ENCODE measurements at regions of chr7 and their contacts with region 1.

Region 1: DNA sequence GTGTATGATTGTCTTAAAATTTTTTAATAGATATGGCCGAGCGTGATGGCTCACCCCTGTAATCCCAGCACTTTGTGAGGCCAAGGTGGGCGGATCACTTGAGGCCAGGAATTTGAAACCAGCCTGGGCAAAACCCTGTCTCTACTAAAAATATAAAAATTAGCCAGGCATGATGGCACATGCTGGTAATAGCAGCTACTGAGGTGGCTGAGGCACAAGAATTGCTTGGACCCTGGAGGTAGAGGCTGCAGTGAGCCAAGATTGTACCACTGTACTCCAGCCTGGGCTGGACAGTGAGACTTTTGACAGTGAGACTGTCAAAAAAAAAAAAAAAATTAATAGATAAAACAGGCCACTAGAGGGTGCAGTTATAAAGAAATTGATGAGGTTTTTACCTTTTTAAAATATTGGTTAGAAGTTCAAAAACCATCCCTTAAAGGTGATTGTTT is 20.5 kb downstream of the NOM1 start:
- DNase-seq: no peak

Region 2: DNA sequence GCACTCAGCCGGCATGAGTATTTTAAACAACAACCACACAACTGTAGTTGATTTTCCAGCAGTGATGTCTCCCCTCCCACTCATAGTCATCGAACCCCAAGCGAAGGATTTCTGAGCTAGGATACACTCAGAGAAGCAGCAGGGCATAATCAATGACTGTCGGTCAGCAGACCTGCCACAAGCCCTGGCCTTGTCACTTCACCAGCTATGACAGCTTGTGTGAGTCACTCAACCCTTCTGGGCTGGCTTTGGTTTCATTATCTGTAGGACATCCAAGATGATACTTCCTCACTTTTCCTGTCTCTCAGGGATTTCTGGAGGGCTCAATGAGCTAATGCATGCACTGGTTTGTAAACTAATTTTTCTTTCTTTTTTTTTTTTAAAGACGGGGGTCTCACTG is 146.8 kb after region 1 on chr7:
- intact Hi-C with region 1: no loop called
- DNase-seq: no peak

Region 3: GRCh38 chr7:157239571-157240270 is 269.7 kb after region 1 on chr7:
- intact Hi-C with region 1: loop called in 1 of 2 experiments (anchors 10 kb)
- DNase-seq: no peak

Region 4: DNA sequence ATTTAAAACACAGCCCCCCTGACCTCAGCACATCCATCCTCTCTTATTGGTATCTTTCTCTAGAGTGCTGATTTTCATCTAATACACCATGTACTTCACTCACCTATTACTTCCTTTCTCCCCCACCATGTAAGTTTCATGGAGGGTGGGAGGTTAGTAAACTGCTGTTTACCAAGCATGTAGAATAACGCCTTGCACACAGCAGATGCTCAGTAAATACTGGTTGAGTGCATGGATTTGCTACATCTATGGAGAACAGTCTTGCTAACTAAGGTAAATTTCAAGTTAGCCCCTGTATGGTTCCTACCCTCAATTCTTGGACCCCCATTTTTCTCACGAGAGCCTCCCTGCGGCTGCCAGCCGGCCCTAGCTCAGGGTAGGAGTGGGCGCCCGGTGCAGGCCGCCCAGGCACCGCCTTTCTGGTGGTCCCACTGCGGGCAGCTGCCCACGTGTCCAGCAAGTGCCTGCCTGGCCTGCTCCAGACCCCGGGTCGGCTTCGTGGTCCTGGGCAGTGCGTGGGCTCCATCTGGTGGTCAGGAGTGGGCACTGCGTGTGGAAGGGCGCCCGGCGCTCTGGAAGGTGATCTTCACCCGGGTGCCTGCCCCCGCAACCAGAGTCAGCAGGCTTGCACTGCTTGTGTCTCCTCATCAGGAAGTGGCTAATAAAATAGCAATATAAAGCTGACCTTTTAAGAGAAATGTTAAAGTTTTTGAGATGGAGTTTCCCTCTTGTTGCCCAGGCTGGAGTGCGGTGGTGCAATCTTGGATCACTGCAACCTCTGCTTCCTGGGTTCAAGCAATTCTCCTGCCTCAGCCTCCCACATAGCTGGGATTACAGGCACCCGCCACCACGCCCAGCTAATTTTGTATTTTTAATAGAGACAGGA is 303.5 kb after region 1 on chr7:
- intact Hi-C with region 1: loop called in 1 of 2 experiments (anchors 10 kb)
- DNase-seq: peak; percentile 89